Endothelial cell of umbilical vein (primary cell): ENCODE measurements at regions of chr1 and their contacts with region 1.

Region 1: GRCh38 chr1:59596441-59596861 is 218.3 kb upstream of the HOOK1 start:
- DNase-seq: peak; percentile 98
- H3K4me3 ChIP-seq: no peak overlapping the region
- H3K27ac ChIP-seq: peak overlapping the region; percentile 83
- H3K4me1 ChIP-seq: peaks cover 29% of the 10 kb centered on the region
- H3K27me3 ChIP-seq: no peaks in the 10 kb centered on the region
- CTCF ChIP-seq: no peak
- POLR2A ChIP-seq: no peak

Region 2: DNA sequence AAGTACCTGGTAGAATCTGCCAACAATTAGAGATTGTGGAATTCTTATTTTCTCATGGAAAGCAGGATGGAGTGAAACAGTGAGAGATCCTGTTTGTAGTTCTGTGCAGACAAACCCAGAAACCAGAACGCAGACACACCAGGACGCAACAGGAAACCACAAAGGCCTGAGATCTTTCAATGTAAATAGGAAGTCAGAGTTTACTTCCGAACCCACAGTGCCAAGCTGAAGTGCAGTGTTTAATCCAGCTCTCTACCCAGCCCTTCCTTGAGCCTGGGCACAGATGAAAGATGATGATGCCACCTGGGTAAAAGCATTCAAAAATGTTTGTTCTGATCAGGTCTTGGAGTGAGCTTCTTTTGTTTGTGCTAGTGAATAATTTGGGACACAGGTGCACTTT is 25.9 kb before region 1 on chr1:
- CTCF ChIA-PET with region 1: interaction called, 12 read pairs
- POLR2A ChIA-PET with region 1: no interaction called
- dilution Hi-C with region 1: no loop called
- intact Hi-C with region 1: loop called (anchors 1 kb)
- DNase-seq: peak; percentile 80
- H3K4me3 ChIP-seq: peak overlapping the region in 1 of 3 experiments; percentile 38
- H3K27ac ChIP-seq: peak overlapping the region; percentile 71
- H3K4me1 ChIP-seq: peaks cover 19% of the 10 kb centered on the region
- H3K27me3 ChIP-seq: no peaks in the 10 kb centered on the region
- CTCF ChIP-seq: no peak
- POLR2A ChIP-seq: no peak

Region 3: GRCh38 chr1:59718064-59718988 is 121.9 kb after region 1 on chr1:
- CTCF ChIA-PET with region 1: no interaction called
- POLR2A ChIA-PET with region 1: no interaction called
- dilution Hi-C with region 1: no loop called
- intact Hi-C with region 1: no loop called
- DNase-seq: no peak
- H3K4me3 ChIP-seq: no peak overlapping the region
- H3K27ac ChIP-seq: no peak overlapping the region
- H3K4me1 ChIP-seq: peaks cover 4% of the 10 kb centered on the region
- H3K27me3 ChIP-seq: no peaks in the 10 kb centered on the region
- CTCF ChIP-seq: peak in 1 of 2 donors; percentile 13
- POLR2A ChIP-seq: no peak

Region 4: GRCh38 chr1:59947047-59947938 is 350.8 kb after region 1 on chr1:
- CTCF ChIA-PET with region 1: no interaction called
- POLR2A ChIA-PET with region 1: no interaction called
- dilution Hi-C with region 1: no loop called
- intact Hi-C with region 1: no loop called
- DNase-seq: peak; percentile 67
- H3K4me3 ChIP-seq: no peak overlapping the region
- H3K27ac ChIP-seq: no peak overlapping the region
- H3K4me1 ChIP-seq: no peaks in the 10 kb centered on the region
- H3K27me3 ChIP-seq: peaks cover 0 to 10% of the 10 kb centered on the region in 2 experiments
- CTCF ChIP-seq: peak; percentile 84 to 85
- POLR2A ChIP-seq: no peak

Region 5: DNA sequence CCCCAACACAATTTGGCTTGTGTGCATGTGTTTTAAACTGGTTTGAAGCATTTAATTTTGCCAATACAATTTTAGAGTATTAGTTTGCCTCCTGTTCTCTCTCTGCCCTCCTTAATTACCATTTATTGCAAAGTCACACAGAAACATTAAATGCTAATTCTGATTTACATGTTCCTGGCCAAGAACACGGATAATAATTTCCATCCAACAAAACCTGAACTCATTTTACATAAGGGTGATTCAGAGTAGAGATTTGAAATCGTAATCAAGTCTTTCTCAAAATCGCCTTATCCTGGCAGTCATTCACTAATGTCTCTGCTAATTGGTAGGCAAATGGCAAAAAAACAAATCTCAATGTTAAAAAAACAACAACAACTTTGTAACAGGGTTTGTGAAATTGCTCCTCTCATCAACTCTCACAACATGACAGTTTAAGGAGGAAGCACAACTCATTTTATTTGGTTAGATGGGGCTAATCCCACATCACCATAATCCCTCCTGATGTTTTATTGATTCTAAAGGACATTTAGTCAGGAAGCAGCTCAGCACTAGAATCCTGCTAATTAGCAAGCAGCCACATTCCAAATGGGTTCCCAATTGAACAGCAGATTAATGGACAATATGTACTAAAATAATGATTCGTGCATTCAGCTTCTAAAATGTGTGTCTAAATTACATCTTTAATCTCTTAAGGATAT is 421.2 kb after region 1 on chr1:
- CTCF ChIA-PET with region 1: no interaction called
- POLR2A ChIA-PET with region 1: no interaction called
- dilution Hi-C with region 1: no loop called
- intact Hi-C with region 1: no loop called
- DNase-seq: no peak
- H3K4me3 ChIP-seq: no peak overlapping the region
- H3K27ac ChIP-seq: no peak overlapping the region
- H3K4me1 ChIP-seq: no peaks in the 10 kb centered on the region
- H3K27me3 ChIP-seq: peaks cover 0 to 4% of the 10 kb centered on the region in 2 experiments
- CTCF ChIP-seq: no peak
- POLR2A ChIP-seq: no peak